ENCODE measurements at regions of chr4 and their contacts with region 1.

Region 1: GRCh38 chr4:56435306-56435926 is at the start of gene PPAT:
- DNase-seq: peak; percentile 99
- ATAC-seq: peak; percentile 84 to 96 (median 85)
- H3K4me3 ChIP-seq: peak within 1 kb of the TSS; percentile 82
- H3K4me3 Mint-ChIP-seq: peak within 1 kb of the TSS; percentile 97
- H3K27ac ChIP-seq: peak within 1 kb of the TSS; percentile 89
- H3K27ac Mint-ChIP-seq: peak within 1 kb of the TSS; percentile 89 to 91
- H3K4me1 ChIP-seq: peaks cover 18% of the 10 kb centered on the region
- H3K4me1 Mint-ChIP-seq: peaks cover 26 to 28% of the 10 kb centered on the region in 2 donors
- H3K27me3 ChIP-seq: no peaks in the 10 kb centered on the region
- H3K27me3 Mint-ChIP-seq: no peaks in the 10 kb centered on the region
- CTCF ChIP-seq: no peak
- total RNA-seq, gene PPAT: 4.3 to 8.9 (median 6.2) TPM

Region 2: GRCh38 chr4:55948726-55949474 is 486.5 kb before region 1 on chr4 and contains the start of gene CEP135:
- intact Hi-C with region 1: loop called (anchors 2 kb)
- DNase-seq: peak; percentile 94 to 95
- ATAC-seq: peak; percentile 80 to 93 (median 87)
- H3K4me3 ChIP-seq: peak within 1 kb of the TSS; percentile 87
- H3K4me3 Mint-ChIP-seq: peak within 1 kb of the TSS; percentile 95
- H3K27ac ChIP-seq: peak within 1 kb of the TSS; percentile 98
- H3K27ac Mint-ChIP-seq: peak within 1 kb of the TSS; percentile 95 to 98
- H3K4me1 ChIP-seq: peaks cover 19% of the 10 kb centered on the region
- H3K4me1 Mint-ChIP-seq: peaks cover 25 to 26% of the 10 kb centered on the region in 2 donors
- H3K27me3 ChIP-seq: no peaks in the 10 kb centered on the region
- H3K27me3 Mint-ChIP-seq: no peaks in the 10 kb centered on the region
- CTCF ChIP-seq: peak; percentile 97
- total RNA-seq, gene CEP135: 18.7 to 24.4 (median 19.9) TPM

Region 3: DNA sequence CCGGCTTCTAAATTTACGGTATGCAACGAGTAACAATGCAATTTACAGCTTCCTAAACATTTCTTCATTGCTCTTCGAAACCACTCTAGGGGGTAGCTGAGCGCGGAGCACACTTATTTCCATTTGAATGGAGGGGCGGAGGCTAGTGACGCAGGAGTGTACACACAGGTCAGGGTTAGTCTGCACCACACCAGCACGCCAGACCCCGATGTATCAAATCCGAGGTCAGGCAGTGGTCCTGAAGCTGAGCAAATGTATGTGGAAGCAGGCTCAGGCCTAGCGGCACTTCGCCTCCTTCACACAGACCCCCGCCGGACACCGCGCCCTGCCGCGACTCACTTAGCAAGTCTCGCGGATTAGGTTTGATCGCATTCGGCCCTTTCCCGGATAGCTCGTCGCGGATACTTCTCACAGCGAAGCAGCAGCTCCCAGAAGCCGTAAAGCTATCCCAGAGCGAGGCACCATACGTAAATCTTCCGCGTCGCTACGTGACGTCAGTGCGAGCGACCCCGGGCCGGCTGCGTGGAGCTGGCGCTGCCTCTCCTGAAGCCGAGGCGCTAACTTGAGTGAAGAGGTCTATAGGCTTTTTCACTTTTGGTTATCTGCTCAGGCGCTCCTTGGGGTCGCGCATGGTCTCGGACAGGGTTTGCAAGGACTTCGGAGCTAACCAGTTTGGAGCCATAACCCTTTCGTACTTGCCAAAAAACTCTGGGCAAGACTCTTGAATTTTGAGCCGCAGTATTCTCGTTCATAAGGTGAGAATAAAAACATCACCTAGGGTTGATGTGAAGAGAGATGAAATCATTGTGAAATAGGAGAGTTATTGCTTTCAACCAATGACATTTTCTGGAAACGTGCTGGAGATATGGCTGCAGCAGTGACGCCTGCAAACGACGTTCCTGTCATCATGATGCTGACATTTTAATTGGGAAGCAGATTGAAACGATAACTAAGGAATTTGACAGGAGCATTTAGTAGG is 48.1 kb before region 1 on chr4 and contains the start of gene AASDH:
- intact Hi-C with region 1: loop called (anchors 1 kb)
- DNase-seq: peak; percentile 97 to 98
- ATAC-seq: peak; percentile 84 to 92 (median 86)
- H3K4me3 ChIP-seq: peak within 1 kb of the TSS; percentile 73
- H3K4me3 Mint-ChIP-seq: peak within 1 kb of the TSS; percentile 98
- H3K27ac ChIP-seq: peak within 1 kb of the TSS; percentile 94
- H3K27ac Mint-ChIP-seq: peak within 1 kb of the TSS; percentile 98 to 99
- H3K4me1 ChIP-seq: peaks cover 11% of the 10 kb centered on the region
- H3K4me1 Mint-ChIP-seq: peaks cover 24 to 31% of the 10 kb centered on the region in 2 donors
- H3K27me3 ChIP-seq: no peaks in the 10 kb centered on the region
- H3K27me3 Mint-ChIP-seq: no peaks in the 10 kb centered on the region
- CTCF ChIP-seq: no peak
- total RNA-seq, gene AASDH: 9.5 to 14.2 (median 9.6) TPM

Region 4: DNA sequence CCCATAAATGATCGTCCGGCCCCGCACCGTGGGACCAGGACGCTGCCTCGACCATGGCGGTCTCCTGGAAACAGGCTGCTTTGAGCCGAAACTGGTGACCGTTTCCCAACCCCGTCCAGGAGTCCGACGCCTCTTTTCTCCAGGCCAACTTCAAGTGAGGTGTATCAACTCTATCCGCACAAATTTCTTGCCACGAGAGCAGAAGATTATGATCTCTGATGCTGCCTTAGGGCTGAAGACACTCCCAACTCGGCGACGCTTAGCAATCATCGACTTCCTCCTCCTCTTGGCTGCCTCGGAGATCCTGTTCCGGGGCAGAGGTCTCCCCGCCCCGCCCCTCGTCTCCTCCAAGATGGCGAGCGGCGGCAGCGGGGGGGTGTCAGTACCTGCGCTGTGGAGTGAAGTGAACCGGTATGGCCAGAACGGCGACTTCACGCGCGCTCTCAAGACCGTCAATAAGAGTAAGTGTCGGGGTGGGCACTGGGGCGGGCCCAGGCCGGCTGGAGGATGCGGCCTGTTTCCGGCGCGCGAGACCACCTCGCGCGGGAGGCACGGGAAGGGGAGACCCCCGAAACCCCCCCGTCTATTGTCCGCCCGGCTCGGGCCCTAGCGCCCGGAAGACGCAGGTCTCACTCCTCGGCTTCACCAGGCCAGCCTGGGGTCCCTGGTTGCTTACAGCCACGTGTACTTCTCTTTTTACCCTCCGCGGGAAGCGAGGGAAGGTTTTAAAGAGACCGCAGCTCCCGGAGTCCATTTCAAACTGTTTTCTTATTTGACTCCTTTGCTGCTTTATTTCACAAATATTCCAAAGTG is 32.1 kb after region 1 on chr4 and contains the start of gene SRP72:
- intact Hi-C with region 1: loop called (anchors 1 kb)
- DNase-seq: peak; percentile 85 to 95
- ATAC-seq: peak; percentile 96 to 99 (median 96)
- H3K4me3 ChIP-seq: peak within 1 kb of the TSS; percentile 81
- H3K4me3 Mint-ChIP-seq: peak within 1 kb of the TSS; percentile 99
- H3K27ac ChIP-seq: peak within 1 kb of the TSS; percentile 85
- H3K27ac Mint-ChIP-seq: peak within 1 kb of the TSS; percentile 97 to 99
- H3K4me1 ChIP-seq: peaks cover 16% of the 10 kb centered on the region
- H3K4me1 Mint-ChIP-seq: peaks cover 53 to 55% of the 10 kb centered on the region in 2 donors
- H3K27me3 ChIP-seq: no peaks in the 10 kb centered on the region
- H3K27me3 Mint-ChIP-seq: no peaks in the 10 kb centered on the region
- CTCF ChIP-seq: no peak
- total RNA-seq, gene SRP72: 102 to 131 (median 120) TPM

Region 5: DNA sequence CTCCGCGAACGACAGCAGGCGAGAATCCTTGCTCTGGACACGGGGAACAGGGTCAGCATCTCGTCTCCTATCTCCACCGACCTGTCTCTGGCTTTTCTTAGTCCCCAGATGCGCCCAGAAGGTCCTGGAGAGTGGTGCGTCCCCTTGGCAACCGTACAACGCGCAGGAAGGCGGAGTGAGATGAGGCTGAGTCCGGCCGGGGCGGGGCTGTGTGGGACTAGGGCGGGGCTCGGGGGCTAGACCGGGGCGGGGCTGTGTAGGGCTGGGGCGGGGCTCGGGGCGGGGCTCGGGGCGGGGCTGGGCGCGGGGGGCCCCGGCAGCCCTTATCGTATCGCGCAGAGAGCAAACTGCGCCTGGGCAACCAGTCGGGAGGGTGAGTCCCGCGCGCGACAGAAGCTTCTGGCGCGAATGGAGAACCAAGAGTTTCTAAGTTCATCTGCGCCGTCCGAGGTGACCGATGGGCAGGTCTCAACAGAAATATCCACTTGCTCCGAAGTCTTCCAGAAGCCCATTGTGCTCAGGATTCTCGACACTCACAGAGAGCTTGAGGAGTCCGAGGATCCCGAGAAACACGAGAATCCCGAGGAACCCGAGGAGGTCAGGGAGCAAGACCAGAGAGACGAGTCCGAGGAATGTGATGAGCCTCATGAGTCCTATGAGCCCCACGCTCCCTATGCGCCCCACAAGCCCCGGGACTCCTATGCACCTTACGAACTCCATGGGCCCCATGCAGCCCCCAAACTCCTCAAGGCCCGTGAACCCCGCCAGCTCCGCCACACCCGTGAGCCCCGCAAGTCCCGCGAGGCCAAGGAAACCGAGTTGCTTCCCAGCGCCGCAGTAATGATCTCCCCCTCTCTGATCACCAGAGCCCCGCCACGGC is 95.1 kb after region 1 on chr4:
- intact Hi-C with region 1: loop called (anchors 1 kb)
- DNase-seq: peak; percentile 55 to 85
- ATAC-seq: peak; percentile 95 to 99 (median 99)
- H3K4me3 ChIP-seq: peak overlapping the region; percentile 68
- H3K4me3 Mint-ChIP-seq: peak overlapping the region; percentile 53
- H3K27ac ChIP-seq: no peak overlapping the region
- H3K27ac Mint-ChIP-seq: no peak overlapping the region
- H3K4me1 ChIP-seq: peaks cover 12% of the 10 kb centered on the region
- H3K4me1 Mint-ChIP-seq: no peaks in the 10 kb centered on the region
- H3K27me3 ChIP-seq: peaks cover 28% of the 10 kb centered on the region
- H3K27me3 Mint-ChIP-seq: peaks cover 0 to 12% of the 10 kb centered on the region in 2 donors
- CTCF ChIP-seq: no peak

Region 6: DNA sequence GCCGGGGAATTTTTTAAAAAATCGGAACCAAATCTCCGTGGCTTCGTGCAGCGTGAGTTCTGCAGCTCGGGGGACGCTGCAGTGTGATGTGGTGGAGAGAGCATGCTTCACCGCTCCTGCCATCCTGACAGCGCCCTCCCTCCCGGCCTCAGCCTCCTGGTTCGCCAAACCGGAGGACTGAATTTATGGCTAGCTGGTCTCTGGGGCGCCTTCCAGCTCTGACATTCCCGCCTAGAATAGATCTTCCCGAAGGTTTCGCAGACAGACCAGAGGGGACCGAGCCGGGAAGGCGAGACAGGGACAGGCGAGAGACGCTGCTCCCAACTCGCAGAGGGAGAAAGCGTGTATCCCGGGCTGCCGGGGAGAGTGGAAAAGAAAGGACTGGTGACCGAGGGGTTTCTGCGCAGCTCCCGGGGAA is 219.8 kb after region 1 on chr4:
- intact Hi-C with region 1: loop called (anchors 5 kb)
- DNase-seq: peak in 1 of 2 donors; percentile 53
- ATAC-seq: peak in 2 of 3 donors; percentile 16 to 31
- H3K4me3 ChIP-seq: peak overlapping the region; percentile 66
- H3K4me3 Mint-ChIP-seq: peak overlapping the region; percentile 94
- H3K27ac ChIP-seq: peak overlapping the region; percentile 73
- H3K27ac Mint-ChIP-seq: peak overlapping the region; percentile 95 to 98
- H3K4me1 ChIP-seq: peaks cover 59% of the 10 kb centered on the region
- H3K4me1 Mint-ChIP-seq: peaks cover 74 to 76% of the 10 kb centered on the region in 2 donors
- H3K27me3 ChIP-seq: no peaks in the 10 kb centered on the region
- H3K27me3 Mint-ChIP-seq: no peaks in the 10 kb centered on the region
- CTCF ChIP-seq: no peak

Region 7: DNA sequence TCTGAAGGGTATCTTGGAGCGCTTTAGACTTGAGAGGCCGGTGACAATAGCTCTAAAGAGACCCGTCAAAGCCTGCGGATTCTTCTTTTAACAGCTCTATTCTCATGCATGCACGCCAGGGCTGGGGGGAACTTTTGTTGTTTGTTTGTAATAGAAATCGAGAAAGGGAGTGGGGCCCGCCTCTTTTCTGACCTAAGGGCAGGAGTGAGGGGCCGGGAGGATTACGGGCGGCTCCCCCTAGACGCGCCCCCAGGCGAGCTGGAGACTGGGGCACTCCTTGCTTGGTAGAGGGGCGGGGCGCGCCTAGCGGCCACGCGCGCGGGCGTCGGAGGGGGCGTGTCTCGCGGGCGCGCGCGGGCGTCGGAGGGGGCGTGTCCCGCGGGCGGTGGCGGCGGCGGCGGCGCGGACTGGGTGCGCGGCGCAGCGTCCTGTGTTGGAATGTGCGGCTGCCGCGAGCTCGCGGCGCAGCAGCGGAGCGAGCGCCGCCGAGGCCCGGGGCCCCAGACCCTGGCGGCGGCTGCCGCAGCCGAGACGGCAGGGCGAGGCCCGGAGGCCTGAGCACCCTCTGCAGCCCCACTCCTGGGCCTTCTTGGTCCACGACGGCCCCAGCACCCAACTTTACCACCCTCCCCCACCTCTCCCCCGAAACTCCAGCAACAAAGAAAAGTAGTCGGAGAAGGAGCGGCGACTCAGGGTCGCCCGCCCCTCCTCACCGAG is 472.2 kb after region 1 on chr4 and contains the start of gene REST:
- intact Hi-C with region 1: loop called (anchors 5 kb)
- DNase-seq: peak; percentile 88 to 91
- ATAC-seq: peak; percentile 67 to 88 (median 71)
- H3K4me3 ChIP-seq: peak within 1 kb of the TSS; percentile 95
- H3K4me3 Mint-ChIP-seq: peak within 1 kb of the TSS; percentile 94
- H3K27ac ChIP-seq: peak within 1 kb of the TSS; percentile 58
- H3K27ac Mint-ChIP-seq: peak within 1 kb of the TSS; percentile 91 to 93
- H3K4me1 ChIP-seq: peaks cover 22% of the 10 kb centered on the region
- H3K4me1 Mint-ChIP-seq: peaks cover 32 to 40% of the 10 kb centered on the region in 2 donors
- H3K27me3 ChIP-seq: no peaks in the 10 kb centered on the region
- H3K27me3 Mint-ChIP-seq: no peaks in the 10 kb centered on the region
- CTCF ChIP-seq: no peak
- total RNA-seq, gene REST: 52.1 to 71.3 (median 67.6) TPM